Vagina (tissue), 2 donors: ENCODE measurements at regions of chr3 and their contacts with region 1.

Region 1: DNA sequence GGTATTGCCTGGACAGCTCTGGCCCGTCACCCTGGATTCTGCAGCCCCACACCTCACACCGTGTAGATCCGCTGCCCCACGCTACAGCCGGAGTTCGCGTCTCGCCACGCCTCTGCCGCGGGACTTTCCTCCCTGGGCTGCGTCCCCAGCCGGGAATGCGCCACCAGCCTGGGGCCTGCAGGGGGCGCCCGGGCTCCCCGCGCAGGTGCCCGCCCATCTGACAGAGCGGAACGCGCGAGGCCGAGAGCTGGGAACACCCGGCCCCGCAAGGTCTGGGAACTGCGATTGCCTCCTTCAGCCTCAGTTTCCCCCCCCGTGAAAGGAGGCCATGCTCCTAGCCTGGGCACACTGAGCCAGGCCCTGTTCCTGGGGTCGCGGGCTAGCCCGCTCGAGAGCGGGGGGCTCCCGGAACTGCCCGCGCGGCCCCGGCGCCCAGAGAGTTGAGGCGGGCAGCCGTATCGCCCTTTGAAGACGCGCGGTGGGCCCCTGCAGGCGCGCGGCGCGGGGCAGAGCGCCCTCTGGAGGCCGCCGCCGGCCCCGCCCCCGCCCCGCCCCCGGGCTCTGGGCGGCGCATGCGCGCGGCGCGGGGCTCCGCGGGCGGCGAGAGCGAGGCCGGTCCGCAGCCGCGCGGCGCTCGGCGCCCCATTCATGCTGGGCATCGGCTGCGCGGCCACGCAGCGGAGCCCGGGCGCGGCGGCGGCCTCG is at the start of gene PLXNA1:
- DNase-seq: no peak
- H3K4me3 ChIP-seq: peak within 1 kb of the TSS; percentile 74 to 82
- H3K27ac ChIP-seq: peak within 1 kb of the TSS; percentile 87
- H3K4me1 ChIP-seq: peaks cover 49% of the 10 kb centered on the region
- H3K27me3 ChIP-seq: no peaks in the 10 kb centered on the region
- CTCF ChIP-seq: peak; percentile 43 to 90 (median 81)
- POLR2A ChIP-seq: no peak
- total RNA-seq, gene PLXNA1: 31.4 TPM

Region 2: DNA sequence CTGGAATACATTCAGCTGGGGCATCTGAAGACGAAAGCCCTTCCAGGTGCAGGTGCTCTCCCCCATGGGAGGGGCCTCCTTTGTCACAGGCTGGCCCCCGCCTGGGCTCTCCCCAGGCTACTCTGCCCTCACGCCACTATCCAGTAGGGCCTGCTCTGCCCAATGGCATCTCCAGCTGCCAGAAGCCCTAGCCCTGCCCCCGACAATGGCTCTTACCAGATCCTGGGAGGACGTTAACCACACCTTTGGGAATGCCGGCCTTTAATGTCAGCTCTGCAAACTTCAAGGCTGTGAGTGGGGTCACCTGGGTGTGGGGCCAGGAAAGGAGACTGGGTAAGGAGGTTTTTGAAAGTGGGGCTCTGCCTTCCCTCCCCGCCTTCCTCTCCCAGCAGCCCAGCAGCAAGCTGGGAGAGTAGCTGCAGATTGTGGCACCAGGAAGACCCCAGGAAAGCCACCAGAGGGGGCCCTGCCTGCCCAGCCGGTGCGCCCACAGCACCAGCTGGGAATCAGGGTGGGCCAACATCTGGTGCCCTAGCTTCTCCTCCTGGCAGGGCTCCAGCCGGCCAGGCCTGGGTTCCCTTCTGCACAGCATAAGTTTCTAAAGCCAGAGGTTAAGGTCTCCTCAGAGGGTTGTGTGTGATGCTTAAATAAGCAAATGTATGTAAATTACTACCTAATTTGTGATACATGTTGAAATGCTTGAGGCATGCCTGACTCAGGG is 858.3 kb before region 1 on chr3:
- intact Hi-C with region 1: no loop called
- DNase-seq: peak in 1 of 2 donors; percentile 71
- H3K4me3 ChIP-seq: no peak overlapping the region
- H3K27ac ChIP-seq: no peak overlapping the region
- H3K4me1 ChIP-seq: no peaks in the 10 kb centered on the region
- H3K27me3 ChIP-seq: no peaks in the 10 kb centered on the region
- CTCF ChIP-seq: no peak
- POLR2A ChIP-seq: no peak

Region 3: DNA sequence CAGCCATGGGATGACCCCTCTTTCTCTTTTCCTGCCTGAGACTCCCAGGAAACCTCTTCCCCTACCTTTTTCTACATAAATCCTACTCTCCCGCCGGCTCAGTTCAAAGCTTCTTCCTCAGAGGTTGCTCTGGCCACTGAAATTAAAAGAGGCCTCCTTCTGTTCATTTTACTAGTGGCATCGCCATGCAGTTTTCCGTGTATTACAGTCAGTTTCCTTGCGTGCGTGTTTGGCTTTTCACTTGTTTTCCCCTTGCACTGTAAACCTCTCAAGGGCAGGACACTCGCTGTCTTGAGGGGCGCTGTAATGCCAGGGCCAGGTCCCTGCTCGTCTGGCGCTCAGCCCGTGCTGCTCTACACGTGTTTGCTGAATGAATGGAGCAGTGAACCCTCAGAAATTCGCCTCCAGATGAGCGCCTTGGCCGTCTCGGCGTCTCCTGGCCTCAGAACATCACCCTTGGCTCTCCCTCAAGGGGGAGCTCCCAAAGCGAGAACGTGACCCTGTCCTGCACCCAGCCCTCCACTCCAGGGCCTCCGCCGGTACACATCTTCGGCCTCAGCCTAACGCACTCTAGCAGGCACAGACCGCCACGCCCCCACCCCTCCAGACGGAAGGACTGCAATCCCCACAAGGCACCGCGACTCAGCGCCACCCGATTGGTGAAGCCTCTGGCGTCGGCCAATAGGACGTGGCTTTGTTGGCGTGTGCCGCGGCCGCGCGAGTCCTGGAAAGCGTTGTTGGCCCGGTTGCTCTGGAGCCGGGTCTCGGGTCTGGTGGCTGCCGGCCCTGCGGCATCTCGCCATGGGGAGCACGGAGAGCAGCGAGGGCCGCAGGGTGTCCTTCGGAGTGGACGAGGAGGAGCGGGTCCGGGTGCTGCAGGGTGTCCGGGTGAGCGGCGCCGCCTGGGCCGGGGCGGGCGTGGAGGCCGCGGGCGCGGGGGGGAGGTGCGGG is 278.8 kb before region 1 on chr3 and contains the start of gene CHCHD6:
- intact Hi-C with region 1: loop called (anchors 5 kb)
- DNase-seq: peak in 1 of 2 donors; percentile 95
- H3K4me3 ChIP-seq: peak within 1 kb of the TSS; percentile 71 to 81
- H3K27ac ChIP-seq: peak within 1 kb of the TSS; percentile 47
- H3K4me1 ChIP-seq: peaks cover 13% of the 10 kb centered on the region
- H3K27me3 ChIP-seq: no peaks in the 10 kb centered on the region
- CTCF ChIP-seq: no peak
- POLR2A ChIP-seq: no peak
- total RNA-seq, gene CHCHD6: 12.8 TPM

Region 4: GRCh38 chr3:126752303-126752842 is 230.2 kb before region 1 on chr3:
- intact Hi-C with region 1: loop called (anchors 5 kb)
- DNase-seq: peak; percentile 87 to 94
- H3K4me3 ChIP-seq: no peak overlapping the region
- H3K27ac ChIP-seq: no peak overlapping the region
- H3K4me1 ChIP-seq: peaks cover 12% of the 10 kb centered on the region
- H3K27me3 ChIP-seq: no peaks in the 10 kb centered on the region
- CTCF ChIP-seq: peak; percentile 65 to 90 (median 90)
- POLR2A ChIP-seq: no peak

Region 5: GRCh38 chr3:127044996-127045715 is 62.5 kb after region 1 on chr3:
- intact Hi-C with region 1: no loop called
- DNase-seq: no peak
- H3K4me3 ChIP-seq: no peak overlapping the region
- H3K27ac ChIP-seq: no peak overlapping the region
- H3K4me1 ChIP-seq: peaks cover 5% of the 10 kb centered on the region
- H3K27me3 ChIP-seq: no peaks in the 10 kb centered on the region
- CTCF ChIP-seq: no peak
- POLR2A ChIP-seq: no peak

Region 6: DNA sequence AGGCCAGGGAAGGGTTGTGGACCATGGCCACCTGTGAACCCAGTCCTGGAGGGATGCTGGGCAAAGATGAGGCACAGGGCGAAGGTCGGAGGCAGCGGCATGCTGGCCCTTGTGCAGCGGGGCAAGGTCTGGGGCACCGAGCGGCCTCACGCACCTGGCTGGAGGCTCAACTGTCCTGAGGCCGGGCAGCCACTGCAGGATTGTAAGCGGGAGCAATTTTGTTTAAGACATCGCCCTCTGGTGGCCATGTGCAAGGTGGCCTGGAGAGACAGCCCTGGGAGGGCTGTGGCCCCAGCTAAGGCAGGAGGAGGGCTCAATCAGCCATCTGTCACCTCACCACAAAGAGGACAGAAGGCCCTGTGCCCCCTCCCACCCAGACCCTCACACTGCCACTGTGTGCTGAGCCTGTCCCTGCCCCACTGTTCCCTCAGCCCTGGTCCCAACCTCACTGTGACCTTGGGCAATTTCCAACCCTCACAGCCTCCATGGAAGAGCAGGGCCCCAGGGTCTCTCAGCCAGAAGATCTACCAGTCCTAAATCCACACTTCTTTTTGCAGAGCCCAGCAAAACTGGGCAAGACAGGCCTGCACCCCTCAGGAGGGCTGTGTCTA is 561.7 kb after region 1 on chr3:
- intact Hi-C with region 1: loop called (anchors 10 kb)
- DNase-seq: no peak
- H3K4me3 ChIP-seq: no peak overlapping the region
- H3K27ac ChIP-seq: no peak overlapping the region
- H3K4me1 ChIP-seq: peaks cover 14% of the 10 kb centered on the region
- H3K27me3 ChIP-seq: no peaks in the 10 kb centered on the region
- CTCF ChIP-seq: peak; percentile 52 to 69 (median 65)
- POLR2A ChIP-seq: no peak